ENCODE measurements at regions of chr16 and their contacts with region 1.

Region 1: GRCh38 chr16:69123910-69124309 is 8.5 kb downstream of the CHTF8 start:
- DNase-seq: no peak
- ATAC-seq: peak; percentile 45
- H3K4me3 ChIP-seq: no peak overlapping the region
- H3K27ac ChIP-seq: no peak overlapping the region
- H3K4me1 ChIP-seq: peaks cover 0 to 10% of the 10 kb centered on the region in 2 experiments; a peak in 2 of 4 replicates
- H3K27me3 ChIP-seq: no peaks in the 10 kb centered on the region
- CTCF ChIP-seq: peak; percentile 56 to 72 (median 62); a peak in 5 of 6 replicates
- POLR2A ChIP-seq: no peak
- RAD21 ChIP-seq: peak; percentile 86

Region 2: DNA sequence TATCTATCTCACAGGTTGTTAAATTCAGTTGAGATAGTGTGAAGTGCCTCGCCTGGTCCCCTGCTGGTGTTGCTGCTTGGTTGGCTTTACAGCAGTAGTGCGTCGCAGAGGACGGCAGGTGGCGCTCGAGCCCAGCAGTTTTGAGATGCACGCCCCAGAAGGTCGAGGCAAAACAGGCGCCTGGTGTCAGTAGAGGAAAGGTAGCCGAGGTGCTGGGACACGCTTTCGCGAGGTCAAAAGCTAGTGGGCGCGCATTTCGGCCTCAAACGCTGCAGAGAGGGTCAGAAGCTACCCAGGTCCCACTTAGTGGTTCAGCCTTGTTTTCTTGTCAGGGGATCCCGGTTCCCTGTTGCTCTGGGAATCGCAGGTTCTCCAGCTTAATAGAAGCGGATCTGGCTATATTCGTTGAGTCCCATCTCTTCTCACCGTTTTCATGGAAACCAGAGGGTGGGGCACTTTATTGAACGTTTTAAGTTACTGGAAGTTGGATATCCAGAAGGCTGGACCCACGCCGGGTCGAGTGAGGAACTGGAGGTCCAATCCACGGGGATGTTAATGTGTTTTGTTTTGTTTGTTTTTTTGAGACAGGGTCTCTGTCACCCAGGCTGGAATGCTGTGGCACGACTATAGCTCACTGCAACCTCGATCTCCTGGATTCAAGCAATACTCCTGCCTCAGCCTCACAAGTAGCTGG is 595.1 kb before region 1 on chr16:
- CTCF ChIA-PET with region 1: no interaction called
- POLR2A ChIA-PET with region 1: no interaction called
- RAD21 ChIA-PET with region 1: no interaction called
- intact Hi-C with region 1: loop called (anchors 10 kb)
- DNase-seq: peak; percentile 75
- ATAC-seq: peak; percentile 92
- H3K4me3 ChIP-seq: no peak overlapping the region
- H3K27ac ChIP-seq: no peak overlapping the region
- H3K4me1 ChIP-seq: peaks cover 10 to 23% of the 10 kb centered on the region in 2 experiments
- H3K27me3 ChIP-seq: no peaks in the 10 kb centered on the region
- CTCF ChIP-seq: peak; percentile 66 to 98 (median 86)
- POLR2A ChIP-seq: no peak
- RAD21 ChIP-seq: peak; percentile 98

Region 3: GRCh38 chr16:68704232-68704867 is 419.6 kb before region 1 on chr16:
- CTCF ChIA-PET with region 1: no interaction called
- POLR2A ChIA-PET with region 1: no interaction called
- RAD21 ChIA-PET with region 1: no interaction called
- intact Hi-C with region 1: loop called (anchors 5 kb)
- DNase-seq: peak; percentile 79
- ATAC-seq: peak; percentile 73
- H3K4me3 ChIP-seq: no peak overlapping the region
- H3K27ac ChIP-seq: no peak overlapping the region
- H3K4me1 ChIP-seq: peaks cover 23 to 38% of the 10 kb centered on the region in 2 experiments
- H3K27me3 ChIP-seq: no peaks in the 10 kb centered on the region
- CTCF ChIP-seq: peak; percentile 81 to 98 (median 94)
- POLR2A ChIP-seq: no peak
- RAD21 ChIP-seq: peak; percentile 99

Region 4: GRCh38 chr16:68843482-68844210 is 280.3 kb before region 1 on chr16 and contains the start of gene TANGO6:
- CTCF ChIA-PET with region 1: interaction called, 17 read pairs
- POLR2A ChIA-PET with region 1: no interaction called
- RAD21 ChIA-PET with region 1: interaction called in 1 of 2 experiments, 3 read pairs
- intact Hi-C with region 1: loop called (anchors 2 kb)
- DNase-seq: peak; percentile 47
- ATAC-seq: peak; percentile 87
- H3K4me3 ChIP-seq: peak within 1 kb of the TSS; percentile 88 to 97
- H3K27ac ChIP-seq: peak within 1 kb of the TSS; percentile 67
- H3K4me1 ChIP-seq: peaks cover 2 to 12% of the 10 kb centered on the region in 2 experiments; a peak in 3 of 4 replicates
- H3K27me3 ChIP-seq: no peaks in the 10 kb centered on the region
- CTCF ChIP-seq: peak; percentile 18 to 39 (median 35); a peak in 4 of 6 replicates
- POLR2A ChIP-seq: peak; percentile 94
- RAD21 ChIP-seq: peak; percentile 38; the same call in 1 of the 2 replicates
- total RNA-seq, gene TANGO6: 16.4 TPM

Region 5: GRCh38 chr16:68985855-68986254 is 138.1 kb before region 1 on chr16:
- CTCF ChIA-PET with region 1: interaction called, 3 read pairs
- POLR2A ChIA-PET with region 1: no interaction called
- RAD21 ChIA-PET with region 1: interaction called in 1 of 2 experiments, 10 read pairs
- intact Hi-C with region 1: no loop called
- DNase-seq: peak; percentile 51
- ATAC-seq: peak; percentile 72
- H3K4me3 ChIP-seq: no peak overlapping the region
- H3K27ac ChIP-seq: peak overlapping the region; percentile 49; the same call in 1 of the 2 replicates
- H3K4me1 ChIP-seq: peaks cover 30 to 57% of the 10 kb centered on the region in 2 experiments
- H3K27me3 ChIP-seq: no peaks in the 10 kb centered on the region
- CTCF ChIP-seq: no peak
- POLR2A ChIP-seq: no peak
- RAD21 ChIP-seq: no peak

Region 6: DNA sequence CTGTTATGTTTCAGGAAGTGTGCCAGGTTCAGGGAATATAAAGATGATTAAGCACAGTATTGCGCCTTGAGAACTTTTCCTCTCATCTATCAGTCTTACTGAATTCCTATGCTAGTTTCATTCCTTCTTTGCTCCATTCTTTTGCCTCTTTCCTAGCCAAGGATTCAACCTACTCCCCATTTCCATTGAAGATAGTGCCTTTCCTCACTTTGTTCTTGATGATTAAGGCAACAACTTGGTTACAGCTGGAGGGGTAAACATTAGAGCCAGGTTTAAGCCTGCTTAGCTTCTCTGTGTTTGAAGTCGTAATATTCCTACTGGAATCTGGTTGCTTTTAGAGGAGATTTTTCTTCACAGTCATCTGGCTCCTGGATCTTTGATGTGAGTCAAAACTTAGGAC is 527.3 kb after region 1 on chr16:
- CTCF ChIA-PET with region 1: no interaction called
- POLR2A ChIA-PET with region 1: no interaction called
- RAD21 ChIA-PET with region 1: no interaction called
- intact Hi-C with region 1: no loop called
- DNase-seq: no peak
- ATAC-seq: no peak
- H3K4me3 ChIP-seq: no peak overlapping the region
- H3K27ac ChIP-seq: no peak overlapping the region
- H3K4me1 ChIP-seq: no peaks in the 10 kb centered on the region
- H3K27me3 ChIP-seq: no peaks in the 10 kb centered on the region
- CTCF ChIP-seq: no peak
- POLR2A ChIP-seq: no peak
- RAD21 ChIP-seq: no peak